RWPE1 (cell line): ENCODE measurements at regions of chr6 and their contacts with region 1.

Region 1: GRCh38 chr6:35736253-35736894 is 458 bp upstream of the ARMC12 start:
- DNase-seq: peak; percentile 78
- H3K27ac ChIP-seq: peak overlapping the region; percentile 100
- CTCF ChIP-seq: peak; percentile 93

Region 2: GRCh38 chr6:35385457-35386202 is 350.7 kb before region 1 on chr6:
- CTCF ChIA-PET with region 1: no interaction called
- POLR2A ChIA-PET with region 1: no interaction called
- DNase-seq: no peak
- H3K27ac ChIP-seq: no peak overlapping the region
- CTCF ChIP-seq: no peak

Region 3: DNA sequence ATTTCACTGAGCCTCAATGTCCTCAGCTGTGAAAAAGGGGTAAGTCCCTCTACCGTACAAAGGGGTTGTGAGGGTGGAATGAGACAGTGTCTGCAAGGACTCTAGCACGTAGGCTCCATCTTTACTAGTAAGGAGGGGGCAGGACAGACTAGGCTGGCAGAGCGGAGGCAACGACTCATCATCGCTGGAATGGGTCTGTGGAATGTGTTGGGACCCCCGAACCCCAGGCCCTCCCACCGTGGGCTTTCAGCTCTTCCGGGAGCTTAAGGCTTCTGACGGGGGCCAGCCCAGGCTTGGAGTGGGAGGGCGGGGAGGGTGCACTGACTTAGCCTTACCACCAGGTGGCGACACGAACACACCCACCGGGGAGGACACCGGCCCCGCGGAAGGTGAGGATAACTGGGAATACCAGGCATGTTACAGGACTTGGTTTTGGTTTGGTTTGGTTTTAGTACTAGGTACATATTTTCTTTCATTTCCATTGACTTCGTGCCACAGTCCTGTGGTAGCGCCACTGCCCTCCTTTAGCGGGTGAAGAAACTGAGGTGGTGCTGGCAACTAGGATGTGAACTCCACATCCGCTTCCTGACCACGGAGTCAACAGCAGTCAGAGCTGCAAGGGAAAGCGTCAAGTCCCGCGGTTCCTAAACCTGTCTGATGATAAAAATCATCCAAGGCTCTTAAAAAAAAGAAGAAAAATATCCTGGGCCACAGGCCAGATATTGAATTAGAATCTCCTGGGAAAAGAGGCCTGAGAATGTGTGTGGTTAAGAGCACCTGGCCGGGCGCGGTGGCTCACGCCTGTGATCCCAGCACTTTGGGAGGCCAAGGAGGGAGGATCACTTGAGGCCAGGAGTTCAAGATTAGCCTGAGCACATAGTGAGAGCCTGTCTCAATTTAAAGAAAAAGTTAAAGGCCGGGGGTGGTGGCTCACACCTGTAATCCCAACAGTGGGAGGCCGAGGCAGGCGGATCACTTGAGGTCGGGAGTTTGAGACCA is 213.4 kb before region 1 on chr6:
- CTCF ChIA-PET with region 1: interaction called, 25 read pairs
- POLR2A ChIA-PET with region 1: no interaction called
- DNase-seq: peak; percentile 87
- H3K27ac ChIP-seq: peak overlapping the region; percentile 40; the same call in 1 of the 2 replicates
- CTCF ChIP-seq: peak; percentile 97

Region 4: GRCh38 chr6:35576682-35577081 is 159.7 kb before region 1 on chr6:
- CTCF ChIA-PET with region 1: interaction called, 10 read pairs
- POLR2A ChIA-PET with region 1: no interaction called
- DNase-seq: no peak
- H3K27ac ChIP-seq: peak overlapping the region; percentile 9
- CTCF ChIP-seq: no peak

Region 5: DNA sequence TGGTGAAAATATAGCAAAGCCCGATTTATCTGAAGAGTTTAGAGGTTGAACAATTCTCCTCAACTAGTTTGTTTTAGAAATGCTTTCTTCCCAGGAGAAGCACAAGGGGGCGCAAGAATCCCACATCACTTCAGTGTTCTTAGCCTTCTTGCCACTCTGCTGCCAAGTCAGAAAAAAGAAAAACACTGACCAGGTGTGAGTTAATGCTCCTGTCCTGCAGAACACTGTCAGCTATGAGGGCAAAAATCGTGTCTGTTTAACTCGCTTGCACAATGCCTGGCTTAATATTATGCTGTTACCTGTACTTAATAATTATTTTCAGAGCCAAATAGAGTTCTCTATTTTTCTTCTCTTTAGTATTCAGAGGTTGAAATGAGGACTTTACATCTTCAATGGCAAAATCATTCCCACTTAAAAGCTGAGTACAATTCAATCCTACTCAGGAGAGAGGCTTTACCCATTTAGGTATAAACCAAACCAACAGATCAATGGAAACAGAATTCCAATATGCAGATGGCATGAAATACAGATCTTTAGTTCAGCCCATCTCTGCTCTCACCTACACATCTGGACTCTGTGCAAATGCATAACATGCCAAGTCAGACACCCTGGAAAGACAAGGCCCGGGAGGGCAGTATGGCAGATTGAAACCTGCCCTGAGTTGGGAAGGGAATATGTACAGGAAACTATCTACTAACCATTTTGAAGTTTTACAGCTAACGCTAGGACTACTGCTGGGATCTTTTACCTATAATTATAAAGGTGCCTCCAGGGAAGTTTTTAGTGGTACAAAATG is 152.3 kb before region 1 on chr6:
- CTCF ChIA-PET with region 1: interaction called, 25 read pairs
- POLR2A ChIA-PET with region 1: no interaction called
- DNase-seq: peak; percentile 35
- H3K27ac ChIP-seq: no peak overlapping the region
- CTCF ChIP-seq: peak; percentile 80

Region 6: DNA sequence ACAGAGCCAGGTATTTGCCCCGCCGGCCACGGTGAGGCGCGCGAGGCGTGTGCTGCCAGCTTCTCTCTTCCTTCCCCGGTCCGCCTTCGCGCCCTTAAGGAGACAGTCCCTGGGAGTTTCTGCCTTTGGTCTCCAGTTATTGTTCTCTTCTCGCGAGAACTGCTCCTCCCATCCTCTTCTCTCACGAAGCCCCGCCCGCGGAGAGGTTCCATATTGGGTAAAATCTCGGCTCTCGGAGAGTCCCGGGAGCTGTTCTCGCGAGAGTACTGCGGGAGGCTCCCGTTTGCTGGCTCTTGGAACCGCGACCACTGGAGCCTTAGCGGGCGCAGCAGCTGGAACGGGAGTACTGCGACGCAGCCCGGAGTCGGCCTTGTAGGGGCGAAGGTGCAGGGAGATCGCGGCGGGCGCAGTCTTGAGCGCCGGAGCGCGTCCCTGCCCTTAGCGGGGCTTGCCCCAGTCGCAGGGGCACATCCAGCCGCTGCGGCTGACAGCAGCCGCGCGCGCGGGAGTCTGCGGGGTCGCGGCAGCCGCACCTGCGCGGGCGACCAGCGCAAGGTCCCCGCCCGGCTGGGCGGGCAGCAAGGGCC is 291.2 kb after region 1 on chr6 and contains the start of gene MAPK14:
- CTCF ChIA-PET with region 1: no interaction called
- POLR2A ChIA-PET with region 1: no interaction called
- DNase-seq: peak; percentile 97
- H3K27ac ChIP-seq: peak within 1 kb of the TSS; percentile 92
- CTCF ChIP-seq: peak; percentile 94